Heart left ventricle (tissue), 16 donors: ENCODE measurements at regions of chr17 and their contacts with region 1.

Region 1: DNA sequence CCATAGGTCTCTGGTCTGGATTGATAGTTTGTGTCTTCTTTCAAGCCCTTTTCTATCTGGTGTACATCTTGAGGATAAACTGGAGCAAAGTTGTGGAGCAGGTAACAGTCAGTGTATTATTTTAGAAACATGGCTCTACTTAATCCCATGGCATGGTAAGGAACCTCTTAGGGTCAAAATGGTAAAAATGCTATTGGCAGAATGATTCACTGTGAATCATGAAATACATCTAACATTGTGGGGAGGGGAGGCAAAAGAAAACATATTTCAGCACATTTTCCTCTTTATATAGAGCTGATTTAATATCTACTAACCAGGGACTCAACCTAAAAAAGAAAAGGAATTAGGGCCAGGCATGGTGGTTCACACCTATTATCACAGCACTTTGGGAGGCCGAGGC is 17.9 kb upstream of the ALDH3A2 start:
- DNase-seq: no peak
- ATAC-seq: no peak
- H3K4me3 ChIP-seq: no peak overlapping the region
- H3K27ac ChIP-seq: no peak overlapping the region
- H3K4me1 ChIP-seq: no peaks in the 10 kb centered on the region
- H3K27me3 ChIP-seq: no peaks in the 10 kb centered on the region
- CTCF ChIP-seq: no peak
- POLR2A ChIP-seq: no peak

Region 2: DNA sequence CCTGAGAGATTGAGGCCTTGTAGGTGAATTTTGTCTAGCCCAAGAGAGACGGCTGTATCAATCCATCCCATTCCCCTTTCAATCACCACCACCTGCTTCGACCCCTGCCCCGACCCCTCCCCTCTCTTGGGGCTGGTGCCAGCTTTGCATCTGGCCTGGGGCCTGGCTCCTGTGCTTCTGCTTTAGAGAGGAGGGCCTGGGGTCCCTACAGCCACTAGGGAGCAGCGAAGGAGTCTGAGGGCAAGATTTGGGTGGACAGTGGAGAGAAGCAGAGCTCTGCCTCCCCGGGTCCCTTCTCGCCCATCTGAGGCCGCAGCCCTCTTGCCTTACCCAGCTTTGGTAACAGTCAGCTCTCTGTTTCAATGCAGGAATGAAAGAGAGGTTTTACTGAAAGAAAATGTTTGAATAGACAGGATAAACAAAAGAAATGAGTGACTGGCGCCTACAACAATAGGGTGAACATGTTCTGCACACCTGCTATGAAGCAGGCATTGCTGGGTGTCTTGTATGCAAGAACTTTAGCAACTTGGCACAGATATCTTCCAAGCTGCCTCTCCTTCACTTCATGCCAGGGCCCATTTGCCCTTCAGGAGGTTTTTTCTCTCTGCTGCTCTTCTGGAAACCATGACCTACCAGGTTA is 39.6 kb before region 1 on chr17:
- intact Hi-C with region 1: loop called in 1 of 10 experiments (anchors 5 kb)
- DNase-seq: no peak
- ATAC-seq: no peak
- H3K4me3 ChIP-seq: no peak overlapping the region
- H3K27ac ChIP-seq: no peak overlapping the region
- H3K4me1 ChIP-seq: peaks cover 0 to 12% (median 0%) of the 10 kb centered on the region in 12 donors
- H3K27me3 ChIP-seq: no peaks in the 10 kb centered on the region
- CTCF ChIP-seq: no peak
- POLR2A ChIP-seq: no peak

Region 3: DNA sequence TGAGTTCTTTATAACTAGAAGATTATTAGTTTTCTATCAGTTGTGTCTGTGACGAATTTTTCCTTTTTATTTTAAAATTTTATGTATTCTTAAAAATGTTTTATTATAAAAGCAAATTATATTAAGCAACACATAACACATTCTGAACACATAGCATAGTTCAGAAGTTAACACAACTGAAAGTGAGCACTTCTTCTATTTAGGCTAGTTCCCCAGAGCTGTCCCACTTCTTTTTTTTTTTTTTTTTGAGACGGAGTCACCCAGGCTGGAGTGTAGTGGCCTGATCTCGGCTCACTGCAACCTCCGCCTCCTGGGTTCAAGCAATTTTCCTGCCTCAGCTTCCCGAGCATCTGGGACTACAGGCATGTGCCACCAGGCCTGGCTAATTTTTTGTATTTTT is 19.8 kb before region 1 on chr17:
- intact Hi-C with region 1: no loop called
- DNase-seq: no peak
- ATAC-seq: no peak
- H3K4me3 ChIP-seq: no peak overlapping the region
- H3K27ac ChIP-seq: no peak overlapping the region
- H3K4me1 ChIP-seq: peaks cover 0 to 11% (median 0%) of the 10 kb centered on the region in 12 donors
- H3K27me3 ChIP-seq: no peaks in the 10 kb centered on the region
- CTCF ChIP-seq: no peak
- POLR2A ChIP-seq: no peak

Region 4: GRCh38 chr17:19672009-19672750 is 41.5 kb after region 1 on chr17:
- intact Hi-C with region 1: no loop called
- DNase-seq: peak in 4 of 5 donors; percentile 52 to 73 (median 63)
- ATAC-seq: peak; percentile 74 to 96 (median 92)
- H3K4me3 ChIP-seq: no peak overlapping the region
- H3K27ac ChIP-seq: peak overlapping the region; percentile 3 to 75 (median 49)
- H3K4me1 ChIP-seq: peaks cover 0 to 34% (median 18%) of the 10 kb centered on the region in 12 donors
- H3K27me3 ChIP-seq: no peaks in the 10 kb centered on the region
- CTCF ChIP-seq: peak in 4 of 12 donors; percentile 5 to 15 (median 12)
- POLR2A ChIP-seq: no peak